ENCODE measurements at regions of chr5 and their contacts with region 1.

Region 1: DNA sequence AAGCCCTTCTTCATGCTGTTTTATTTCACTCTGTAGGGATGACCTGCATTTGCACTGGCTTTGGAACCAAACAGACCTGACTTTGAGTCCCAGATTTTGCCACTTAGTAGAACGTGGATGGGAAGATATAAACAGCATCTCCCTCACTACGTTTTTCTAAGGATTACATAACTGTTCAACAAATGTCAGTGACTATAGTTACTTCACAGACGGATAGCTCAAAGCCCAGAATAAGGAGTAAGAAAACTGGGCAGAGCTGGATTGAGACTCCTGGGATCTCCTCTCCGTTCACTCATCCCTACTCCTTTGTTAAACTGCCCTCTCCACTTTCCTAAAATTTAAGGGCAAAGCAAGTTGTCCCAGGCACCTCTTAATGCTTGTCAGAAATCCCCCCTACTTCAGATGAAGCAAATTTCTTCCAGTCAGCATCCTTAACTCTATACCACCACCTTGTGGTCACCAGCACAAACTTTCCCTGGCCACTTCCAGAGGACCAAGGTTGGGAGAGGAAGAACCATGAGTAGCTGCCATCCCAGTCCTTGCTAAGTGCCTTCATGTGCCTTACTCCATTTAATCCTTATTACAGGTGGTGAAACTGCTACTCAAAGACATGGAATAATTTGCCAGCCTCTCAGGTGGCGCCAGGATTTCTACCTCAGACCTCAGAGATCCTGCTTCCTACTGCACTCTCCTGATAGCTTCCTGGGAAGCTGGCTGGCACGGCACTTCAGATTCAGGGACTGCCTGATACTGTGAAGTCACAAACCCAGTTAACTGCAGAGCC is 38.4 kb downstream of the EGR1 start:
- DNase-seq: peak in 1 of 2 donors; percentile 44
- H3K4me3 ChIP-seq: no peak overlapping the region
- H3K27ac ChIP-seq: peak overlapping the region in 1 of 2 donors; percentile 5
- H3K4me1 ChIP-seq: no peaks in the 10 kb centered on the region
- H3K27me3 ChIP-seq: no peaks in the 10 kb centered on the region
- CTCF ChIP-seq: peak; percentile 62 to 90 (median 73)
- POLR2A ChIP-seq: no peak

Region 2: GRCh38 chr5:138449501-138450239 is 54.0 kb before region 1 on chr5:
- intact Hi-C with region 1: loop called (anchors 5 kb)
- DNase-seq: peak; percentile 90 to 92
- H3K4me3 ChIP-seq: no peak overlapping the region
- H3K27ac ChIP-seq: peak overlapping the region in 1 of 2 donors; percentile 23
- H3K4me1 ChIP-seq: no peaks in the 10 kb centered on the region
- H3K27me3 ChIP-seq: no peaks in the 10 kb centered on the region
- CTCF ChIP-seq: peak; percentile 95 to 99 (median 98)
- POLR2A ChIP-seq: no peak

Region 3: GRCh38 chr5:138464008-138464387 is 39.7 kb before region 1 on chr5:
- intact Hi-C with region 1: loop called (anchors 5 kb)
- DNase-seq: peak; percentile 94 to 98
- H3K4me3 ChIP-seq: peak overlapping the region; percentile 69 to 75
- H3K27ac ChIP-seq: peak overlapping the region; percentile 95 to 99
- H3K4me1 ChIP-seq: peaks cover 0 to 8% of the 10 kb centered on the region in 2 donors
- H3K27me3 ChIP-seq: no peaks in the 10 kb centered on the region
- CTCF ChIP-seq: peak; percentile 83 to 94 (median 86)
- POLR2A ChIP-seq: peak; percentile 59 to 82